ENCODE measurements at regions of chrX and their contacts with region 1.

Region 1: GRCh38 chrX:106481341-106481740 is 130.4 kb upstream of the RADX start:
- DNase-seq: no peak
- ATAC-seq: no peak

Region 2: GRCh38 chrX:106611679-106612392 is 130.5 kb after region 1 on chrX and contains the start of gene RADX:
- intact Hi-C with region 1: loop called (anchors 10 kb)
- DNase-seq: peak; percentile 85
- ATAC-seq: peak; percentile 96
- total RNA-seq, gene RADX: 0.87 TPM

Region 3: DNA sequence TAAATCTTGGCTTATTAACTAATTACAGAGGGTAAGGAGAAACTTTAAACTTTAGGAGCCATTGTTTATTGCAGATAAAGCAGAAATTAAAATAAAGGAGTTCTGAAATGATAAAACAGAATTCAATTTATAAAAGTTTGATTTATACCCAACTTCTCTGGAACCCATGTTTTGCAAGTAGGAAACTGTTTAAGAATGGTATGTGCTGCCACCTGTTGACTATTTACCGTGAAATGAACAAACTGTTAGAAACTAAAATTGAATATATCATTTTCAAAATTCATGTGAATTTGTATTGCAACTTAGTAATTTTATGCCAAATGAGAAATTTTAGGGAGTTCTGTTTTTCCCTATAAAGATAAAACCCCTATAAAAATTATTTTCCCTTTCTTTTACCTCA is 310.2 kb after region 1 on chrX:
- intact Hi-C with region 1: loop called (anchors 10 kb)
- DNase-seq: no peak
- ATAC-seq: no peak